Endothelial cell of umbilical vein (primary cell): ENCODE measurements at regions of chr10 and their contacts with region 1.

Region 1: DNA sequence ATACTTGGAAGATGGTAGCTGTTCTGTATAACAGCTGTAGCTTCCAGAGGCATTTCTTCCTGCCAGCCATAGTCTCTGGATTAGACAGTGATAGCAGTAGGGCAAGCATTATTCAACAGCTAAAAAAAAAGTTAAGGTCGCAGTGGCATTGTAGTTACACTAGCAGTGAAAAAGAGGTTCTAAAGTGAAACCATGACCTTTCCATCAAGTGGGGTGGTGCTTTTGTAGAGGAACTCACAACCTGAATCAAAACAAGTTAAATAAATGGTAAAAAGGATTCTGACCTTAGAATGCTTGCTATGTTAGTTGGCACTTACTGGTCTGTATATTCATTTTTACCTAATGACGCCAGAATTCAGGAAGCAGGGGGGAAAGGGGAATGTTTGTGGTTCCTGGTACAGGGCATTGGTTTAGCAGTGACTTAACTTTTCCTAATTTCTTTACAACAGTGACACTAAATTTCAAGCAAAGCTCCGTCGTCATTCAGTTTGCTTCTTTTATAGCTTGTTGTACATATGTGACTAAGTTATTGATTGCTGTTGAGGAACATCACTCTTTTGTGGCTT is 55.0 kb downstream of the GBF1 start:
- DNase-seq: peak; percentile 87
- H3K4me3 ChIP-seq: peak overlapping the region in 1 of 3 experiments; percentile 9
- H3K27ac ChIP-seq: peak overlapping the region; percentile 77
- H3K4me1 ChIP-seq: peaks cover 25% of the 10 kb centered on the region
- H3K27me3 ChIP-seq: no peaks in the 10 kb centered on the region
- CTCF ChIP-seq: no peak
- POLR2A ChIP-seq: no peak

Region 2: GRCh38 chr10:101207026-101207425 is 1093.3 kb before region 1 on chr10:
- CTCF ChIA-PET with region 1: no interaction called
- POLR2A ChIA-PET with region 1: no interaction called
- dilution Hi-C with region 1: no loop called
- intact Hi-C with region 1: no loop called
- DNase-seq: no peak
- H3K4me3 ChIP-seq: no peak overlapping the region
- H3K27ac ChIP-seq: no peak overlapping the region
- H3K4me1 ChIP-seq: no peaks in the 10 kb centered on the region
- H3K27me3 ChIP-seq: peaks cover 21 to 29% of the 10 kb centered on the region in 2 experiments
- CTCF ChIP-seq: no peak
- POLR2A ChIP-seq: no peak

Region 3: GRCh38 chr10:102245101-102245931 is 55.0 kb before region 1 on chr10 and contains the start of gene GBF1:
- CTCF ChIA-PET with region 1: interaction called, 5 read pairs
- POLR2A ChIA-PET with region 1: interaction called, 5 read pairs
- dilution Hi-C with region 1: no loop called
- intact Hi-C with region 1: loop called (anchors 1 kb)
- DNase-seq: peak; percentile 100
- H3K4me3 ChIP-seq: peak within 1 kb of the TSS; percentile 59 to 90 (median 85)
- H3K27ac ChIP-seq: peak within 1 kb of the TSS; percentile 61
- H3K4me1 ChIP-seq: peaks cover 29% of the 10 kb centered on the region
- H3K27me3 ChIP-seq: peaks cover 8% of the 10 kb centered on the region in 2 experiments
- CTCF ChIP-seq: no peak
- POLR2A ChIP-seq: peak; percentile 83
- total RNA-seq, gene GBF1: 45.7 and 49.7 TPM in 2 replicates

Region 4: GRCh38 chr10:102280397-102281101 is 19.8 kb before region 1 on chr10:
- CTCF ChIA-PET with region 1: interaction called, 4 read pairs
- POLR2A ChIA-PET with region 1: interaction called, 3 read pairs
- dilution Hi-C with region 1: no loop called
- intact Hi-C with region 1: loop called (anchors 2 kb)
- DNase-seq: peak; percentile 81
- H3K4me3 ChIP-seq: peak overlapping the region in 1 of 3 experiments; percentile 16
- H3K27ac ChIP-seq: peak overlapping the region; percentile 40
- H3K4me1 ChIP-seq: peaks cover 22% of the 10 kb centered on the region
- H3K27me3 ChIP-seq: no peaks in the 10 kb centered on the region
- CTCF ChIP-seq: no peak
- POLR2A ChIP-seq: no peak

Region 5: GRCh38 chr10:102310361-102311024 is 10.1 kb after region 1 on chr10:
- CTCF ChIA-PET with region 1: interaction called, 8 read pairs
- POLR2A ChIA-PET with region 1: no interaction called
- dilution Hi-C with region 1: no loop called
- intact Hi-C with region 1: loop called (anchors 1 kb)
- DNase-seq: peak; percentile 49
- H3K4me3 ChIP-seq: no peak overlapping the region
- H3K27ac ChIP-seq: peak overlapping the region; percentile 41
- H3K4me1 ChIP-seq: peaks cover 16% of the 10 kb centered on the region
- H3K27me3 ChIP-seq: no peaks in the 10 kb centered on the region
- CTCF ChIP-seq: no peak
- POLR2A ChIP-seq: no peak

Region 6: GRCh38 chr10:102322914-102323313 is 22.6 kb after region 1 on chr10:
- CTCF ChIA-PET with region 1: interaction called, 3 read pairs
- POLR2A ChIA-PET with region 1: interaction called, 15 read pairs
- dilution Hi-C with region 1: no loop called
- intact Hi-C with region 1: no loop called
- DNase-seq: no peak
- H3K4me3 ChIP-seq: no peak overlapping the region
- H3K27ac ChIP-seq: no peak overlapping the region
- H3K4me1 ChIP-seq: no peaks in the 10 kb centered on the region
- H3K27me3 ChIP-seq: no peaks in the 10 kb centered on the region
- CTCF ChIP-seq: no peak
- POLR2A ChIP-seq: no peak

Region 7: GRCh38 chr10:103069453-103070331 is 769.3 kb after region 1 on chr10:
- CTCF ChIA-PET with region 1: no interaction called
- POLR2A ChIA-PET with region 1: no interaction called
- dilution Hi-C with region 1: no loop called
- intact Hi-C with region 1: no loop called
- DNase-seq: peak; percentile 56
- H3K4me3 ChIP-seq: no peak overlapping the region
- H3K27ac ChIP-seq: no peak overlapping the region
- H3K4me1 ChIP-seq: peaks cover 2% of the 10 kb centered on the region
- H3K27me3 ChIP-seq: no peaks in the 10 kb centered on the region
- CTCF ChIP-seq: peak; percentile 49 to 55
- POLR2A ChIP-seq: no peak